Endothelial cell of umbilical vein (primary cell): ENCODE measurements at regions of chr15 and their contacts with region 1.

Region 1: DNA sequence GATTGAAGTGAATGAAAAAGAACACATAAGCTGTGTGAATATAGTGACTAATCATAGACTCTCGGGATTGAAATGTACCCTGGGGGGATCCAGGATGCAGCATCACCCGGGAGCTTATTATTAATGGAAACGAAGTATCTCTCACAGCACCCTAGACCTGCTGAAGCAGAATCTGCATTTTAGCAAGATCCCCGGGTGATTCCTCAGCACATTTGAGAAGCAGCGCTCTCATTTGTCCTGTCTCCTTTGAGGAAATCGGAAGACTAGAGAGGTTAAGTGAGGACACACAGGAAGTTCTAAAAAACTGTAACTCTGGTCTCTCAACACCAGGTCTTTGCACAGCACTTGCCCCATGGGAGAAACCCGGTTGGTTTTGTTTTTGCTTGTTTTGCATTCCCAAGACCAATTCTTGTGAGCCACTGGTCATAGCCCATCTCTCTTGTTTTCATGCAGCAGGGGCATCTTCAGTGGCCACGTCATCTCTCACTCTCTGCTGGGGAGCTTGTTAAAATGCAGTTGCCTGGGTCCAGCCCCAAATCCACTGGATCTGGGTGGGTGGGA is 30.2 kb downstream of the ZNF710 start:
- DNase-seq: no peak
- H3K4me3 ChIP-seq: no peak overlapping the region
- H3K27ac ChIP-seq: no peak overlapping the region
- H3K4me1 ChIP-seq: peaks cover 31% of the 10 kb centered on the region
- H3K27me3 ChIP-seq: no peaks in the 10 kb centered on the region
- CTCF ChIP-seq: no peak
- POLR2A ChIP-seq: no peak

Region 2: DNA sequence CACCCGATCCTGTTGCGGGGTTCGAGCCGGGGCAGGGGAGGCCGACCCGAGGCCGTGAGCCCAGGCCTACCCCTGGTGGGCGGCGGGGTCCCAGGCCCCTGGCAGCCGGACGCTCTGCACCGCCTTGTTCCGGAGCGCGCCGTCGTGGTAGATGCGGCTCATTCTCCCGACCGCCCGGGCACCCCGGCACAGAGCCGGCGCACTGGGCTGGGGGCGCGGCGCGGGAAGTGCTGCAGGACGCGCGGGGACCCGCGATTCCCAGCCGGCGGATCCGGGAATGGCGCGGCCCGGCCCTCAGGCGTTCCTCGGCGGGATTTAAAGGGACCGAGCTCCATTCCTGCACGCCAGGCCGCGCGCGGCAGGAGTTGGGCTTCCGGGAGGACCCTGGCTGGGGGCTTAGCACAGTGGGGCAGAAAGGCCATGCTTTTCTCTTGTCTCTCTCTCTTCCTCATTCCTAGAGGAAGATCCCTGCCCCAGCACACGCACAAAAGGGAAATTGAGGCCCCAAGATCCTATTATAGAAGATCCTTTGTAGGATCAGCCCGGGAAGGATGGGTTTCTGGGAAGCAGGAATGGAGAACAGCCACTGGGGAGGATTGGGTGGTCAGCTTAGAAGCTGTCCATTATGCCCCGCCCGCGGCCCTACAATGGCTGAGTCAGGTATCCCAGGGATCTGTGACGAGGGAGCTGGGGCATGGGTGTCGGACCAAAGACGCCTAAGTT is 118.5 kb before region 1 on chr15 and contains the start of gene ARPIN:
- CTCF ChIA-PET with region 1: interaction called, 4 read pairs
- POLR2A ChIA-PET with region 1: no interaction called
- dilution Hi-C with region 1: no loop called
- intact Hi-C with region 1: loop called (anchors 2 kb)
- DNase-seq: peak; percentile 38
- H3K4me3 ChIP-seq: peak within 1 kb of the TSS; percentile 61 to 84 (median 68)
- H3K27ac ChIP-seq: peak within 1 kb of the TSS; percentile 5
- H3K4me1 ChIP-seq: peaks cover 11% of the 10 kb centered on the region
- H3K27me3 ChIP-seq: no peaks in the 10 kb centered on the region
- CTCF ChIP-seq: no peak
- POLR2A ChIP-seq: peak; percentile 41
- total RNA-seq, gene ARPIN: 18.7 and 23.3 TPM in 2 replicates

Region 3: DNA sequence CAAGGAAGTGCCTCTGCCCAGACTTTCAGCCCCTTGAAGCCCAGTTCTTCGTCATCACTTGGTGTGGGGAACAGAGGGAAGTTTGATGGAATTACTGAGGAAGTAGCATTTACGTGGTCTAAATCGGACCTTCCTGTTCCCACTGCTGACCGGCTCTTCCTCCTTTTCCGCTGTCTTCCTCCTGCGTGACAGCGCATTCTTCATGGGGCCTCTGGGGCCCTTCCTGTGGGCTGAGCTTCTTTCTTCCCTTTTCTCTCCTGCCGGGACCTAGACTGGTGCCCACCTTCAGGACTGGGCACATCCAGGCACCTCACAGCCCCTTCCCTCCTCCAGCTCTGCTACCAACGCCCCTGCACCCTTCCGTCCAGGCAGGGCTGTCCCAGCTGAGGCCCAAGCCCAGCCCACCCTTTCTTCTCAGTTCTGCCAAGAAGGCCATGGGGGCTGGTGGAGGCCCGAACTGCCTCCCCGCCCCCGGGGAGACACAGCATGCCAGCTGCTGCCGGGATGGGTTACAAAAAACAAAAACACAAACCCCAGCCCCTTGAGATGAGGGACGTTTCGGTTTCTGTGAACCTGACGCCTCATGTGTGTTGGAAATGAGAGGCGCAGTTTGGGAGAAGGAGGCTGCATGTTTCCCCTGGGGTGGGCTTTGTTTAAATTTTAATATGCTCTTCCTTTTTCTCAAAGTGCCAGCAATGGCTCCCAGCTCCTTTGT is 11.1 kb before region 1 on chr15:
- CTCF ChIA-PET with region 1: interaction called, 7 read pairs
- POLR2A ChIA-PET with region 1: interaction called, 4 read pairs
- dilution Hi-C with region 1: no loop called
- intact Hi-C with region 1: loop called (anchors 1 kb)
- DNase-seq: peak; percentile 55
- H3K4me3 ChIP-seq: no peak overlapping the region
- H3K27ac ChIP-seq: peak overlapping the region; percentile 75
- H3K4me1 ChIP-seq: peaks cover 23% of the 10 kb centered on the region
- H3K27me3 ChIP-seq: no peaks in the 10 kb centered on the region
- CTCF ChIP-seq: no peak
- POLR2A ChIP-seq: peak; percentile 39

Region 4: GRCh38 chr15:90054618-90055097 is 23.3 kb after region 1 on chr15:
- CTCF ChIA-PET with region 1: no interaction called
- POLR2A ChIA-PET with region 1: no interaction called
- dilution Hi-C with region 1: no loop called
- intact Hi-C with region 1: no loop called
- DNase-seq: peak; percentile 29
- H3K4me3 ChIP-seq: no peak overlapping the region
- H3K27ac ChIP-seq: no peak overlapping the region
- H3K4me1 ChIP-seq: peaks cover 7% of the 10 kb centered on the region
- H3K27me3 ChIP-seq: no peaks in the 10 kb centered on the region
- CTCF ChIP-seq: no peak
- POLR2A ChIP-seq: no peak

Region 5: DNA sequence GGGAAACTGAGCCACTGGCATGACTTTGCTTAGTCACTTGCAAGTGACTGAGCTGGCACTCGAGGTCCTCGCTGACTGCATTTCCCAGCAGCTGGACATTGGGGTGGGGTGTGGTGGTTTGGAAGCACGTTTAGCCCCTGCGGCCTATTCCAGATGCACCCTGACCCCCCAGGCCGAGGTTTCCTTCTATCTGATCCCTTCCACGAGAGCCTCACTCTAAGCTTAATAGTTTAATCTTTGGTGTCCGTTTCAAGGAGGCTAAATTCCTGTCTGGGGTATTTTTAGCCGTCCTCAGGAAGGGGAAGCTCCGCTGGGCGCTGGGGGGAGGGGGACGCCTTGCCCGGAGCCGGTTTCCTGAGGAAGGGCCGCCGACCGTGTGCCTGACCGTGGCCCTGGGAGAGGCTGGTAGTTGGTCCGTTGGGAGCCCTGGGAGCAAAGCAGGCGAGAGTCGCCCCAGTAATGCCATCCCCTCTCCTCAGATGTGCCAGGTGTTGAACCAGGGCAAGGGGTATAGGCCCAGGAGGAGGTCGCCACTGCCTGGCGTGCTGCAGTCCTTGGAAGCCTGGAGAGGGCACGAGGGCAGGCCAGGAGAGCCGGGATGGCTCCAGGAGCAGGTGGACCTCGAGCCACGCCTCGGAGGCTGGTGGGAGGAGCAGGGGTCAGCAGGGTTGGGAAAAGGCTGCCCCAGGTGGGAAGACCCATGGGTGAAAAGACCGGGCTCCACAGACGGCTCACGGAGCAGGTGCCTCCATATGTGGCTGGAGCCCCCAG is 33.8 kb after region 1 on chr15:
- CTCF ChIA-PET with region 1: interaction called, 23 read pairs
- POLR2A ChIA-PET with region 1: interaction called, 5 read pairs
- dilution Hi-C with region 1: no loop called
- intact Hi-C with region 1: loop called (anchors 1 kb)
- DNase-seq: peak; percentile 71
- H3K4me3 ChIP-seq: peak overlapping the region in 1 of 3 experiments; percentile 2
- H3K27ac ChIP-seq: peak overlapping the region; percentile 79
- H3K4me1 ChIP-seq: peaks cover 28% of the 10 kb centered on the region
- H3K27me3 ChIP-seq: no peaks in the 10 kb centered on the region
- CTCF ChIP-seq: no peak
- POLR2A ChIP-seq: no peak